Activated CD4-positive, alpha-beta T cell treated with anti-CD3 and anti-CD28 coated beads for 36 hours (primary cell): ENCODE measurements at regions of chr7 and their contacts with region 1.

Region 1: DNA sequence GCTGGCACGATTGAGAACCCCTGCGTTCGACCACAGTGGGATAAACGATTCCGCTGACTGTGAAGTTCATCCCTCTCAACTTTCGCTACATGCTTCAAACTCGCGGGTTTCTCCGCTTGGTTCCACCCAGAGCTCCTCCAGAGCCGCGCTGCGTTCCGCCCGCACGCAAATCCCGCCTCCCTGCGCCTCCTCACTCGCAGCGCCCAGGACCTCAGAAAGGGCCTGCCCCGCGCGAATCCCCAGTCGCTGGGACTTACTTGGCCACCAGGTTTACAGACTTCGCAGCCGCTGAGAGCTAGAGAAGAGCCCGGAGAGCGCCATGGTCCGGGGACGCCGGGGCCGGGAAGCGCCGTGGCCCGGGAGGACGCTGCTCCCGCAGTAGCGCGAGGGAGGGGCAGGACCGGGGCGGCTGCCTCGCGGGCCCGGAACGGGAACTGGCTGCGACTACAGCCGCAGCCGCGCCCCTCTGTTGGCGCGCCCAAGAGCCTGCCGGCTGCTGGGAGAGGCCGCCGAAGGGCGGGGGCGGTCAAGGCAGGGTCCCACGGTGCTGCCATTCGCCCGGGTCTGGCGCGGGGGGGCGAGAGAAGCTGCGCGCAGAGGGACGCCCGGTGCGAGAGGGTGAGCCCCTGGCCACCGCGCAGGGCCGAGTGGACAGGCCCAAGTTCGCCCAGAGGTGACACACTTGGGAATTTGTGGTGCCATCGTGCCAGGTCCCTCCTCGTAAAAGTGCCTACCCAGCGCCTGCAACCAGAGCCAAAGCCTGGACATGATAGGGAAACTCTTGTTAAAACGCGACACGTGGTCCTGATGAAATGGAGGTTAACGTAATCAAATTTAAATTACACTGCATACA is at the start of gene NOD1:
- DNase-seq: peak; percentile 86
- ATAC-seq: peak; percentile 89
- H3K4me3 Mint-ChIP-seq: peak within 1 kb of the TSS; percentile 88
- H3K27ac Mint-ChIP-seq: peak within 1 kb of the TSS; percentile 90
- H3K4me1 Mint-ChIP-seq: peaks cover 50% of the 10 kb centered on the region
- H3K27me3 Mint-ChIP-seq: no peaks in the 10 kb centered on the region
- total RNA-seq, gene NOD1: 10.8 to 11.0 TPM

Region 2: GRCh38 chr7:30134611-30135545 is 343.7 kb before region 1 on chr7 and contains the start of gene MTURN:
- CTCF ChIA-PET with region 1: no interaction called
- POLR2A ChIA-PET with region 1: no interaction called
- intact Hi-C with region 1: loop called in 1 of 2 experiments (anchors 2 kb)
- DNase-seq: peak; percentile 92
- ATAC-seq: peak; percentile 83
- H3K4me3 Mint-ChIP-seq: peak within 1 kb of the TSS; percentile 81
- H3K27ac Mint-ChIP-seq: peak within 1 kb of the TSS; percentile 84
- H3K4me1 Mint-ChIP-seq: peaks cover 4% of the 10 kb centered on the region
- H3K27me3 Mint-ChIP-seq: no peaks in the 10 kb centered on the region
- total RNA-seq, gene MTURN: 4.2 TPM

Region 3: DNA sequence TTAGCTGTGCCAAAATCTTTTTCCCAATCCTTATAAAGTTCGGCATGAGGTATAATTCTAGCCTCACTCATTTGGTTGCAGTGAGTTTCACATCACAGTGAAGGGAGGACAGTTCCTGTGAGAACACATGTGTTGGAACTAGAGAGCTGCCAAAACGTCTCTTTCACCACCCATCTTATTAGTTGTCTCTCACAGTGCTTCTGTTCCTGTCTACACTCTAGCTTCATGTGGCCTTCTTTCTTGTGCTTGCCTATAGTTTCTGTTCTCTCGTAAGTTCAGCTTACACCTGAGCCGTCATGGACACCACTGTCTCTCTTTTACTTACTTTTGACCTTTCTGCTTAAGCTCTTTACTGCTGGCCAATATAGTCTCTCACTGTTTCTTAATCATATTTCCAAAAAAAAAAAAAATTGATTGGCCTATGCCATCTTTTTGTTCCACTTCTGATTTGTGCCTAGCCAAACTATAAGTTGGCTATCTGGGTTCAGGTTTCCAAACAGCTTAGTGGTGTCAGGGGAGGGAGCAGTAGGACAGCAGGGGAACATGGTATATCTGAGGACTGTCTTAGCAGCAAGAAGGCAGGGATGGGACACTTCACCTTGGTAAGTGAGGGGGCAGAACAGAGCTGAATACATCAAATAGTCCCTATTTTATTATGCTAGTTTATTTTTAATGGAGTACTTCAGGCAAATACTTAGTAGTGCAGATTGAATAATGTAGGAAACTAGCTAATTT is 156.1 kb before region 1 on chr7:
- CTCF ChIA-PET with region 1: no interaction called
- POLR2A ChIA-PET with region 1: no interaction called
- intact Hi-C with region 1: loop called in 1 of 2 experiments (anchors 2 kb)
- DNase-seq: peak; percentile 16
- ATAC-seq: peak; percentile 68
- H3K4me3 Mint-ChIP-seq: peak overlapping the region; percentile 73
- H3K27ac Mint-ChIP-seq: peak overlapping the region; percentile 91
- H3K4me1 Mint-ChIP-seq: peaks cover 63% of the 10 kb centered on the region
- H3K27me3 Mint-ChIP-seq: no peaks in the 10 kb centered on the region

Region 4: GRCh38 chr7:30504347-30505173 is 26.0 kb after region 1 on chr7 and contains the start of gene GGCT:
- CTCF ChIA-PET with region 1: no interaction called
- POLR2A ChIA-PET with region 1: no interaction called
- intact Hi-C with region 1: loop called (anchors 1 kb)
- DNase-seq: peak; percentile 98
- ATAC-seq: peak; percentile 99
- H3K4me3 Mint-ChIP-seq: peak within 1 kb of the TSS; percentile 84
- H3K27ac Mint-ChIP-seq: peak within 1 kb of the TSS; percentile 90
- H3K4me1 Mint-ChIP-seq: peaks cover 44% of the 10 kb centered on the region
- H3K27me3 Mint-ChIP-seq: no peaks in the 10 kb centered on the region
- total RNA-seq, gene GGCT: 48.8 to 76.8 TPM